Activated B cell treated with CpG ODN at 0.5 μM for 24 hours (primary cell): ENCODE measurements at regions of chr2 and their contacts with region 1.

Region 1: GRCh38 chr2:147628971-147629421 is 215.8 kb upstream of the ACVR2A start:
- DNase-seq: no peak
- ATAC-seq: peak; percentile 42
- H3K4me3 Mint-ChIP-seq: no peak overlapping the region
- H3K27ac Mint-ChIP-seq: peak overlapping the region; percentile 1
- H3K4me1 Mint-ChIP-seq: peaks cover 21% of the 10 kb centered on the region
- H3K27me3 Mint-ChIP-seq: no peaks in the 10 kb centered on the region
- CTCF ChIP-seq: no peak

Region 2: DNA sequence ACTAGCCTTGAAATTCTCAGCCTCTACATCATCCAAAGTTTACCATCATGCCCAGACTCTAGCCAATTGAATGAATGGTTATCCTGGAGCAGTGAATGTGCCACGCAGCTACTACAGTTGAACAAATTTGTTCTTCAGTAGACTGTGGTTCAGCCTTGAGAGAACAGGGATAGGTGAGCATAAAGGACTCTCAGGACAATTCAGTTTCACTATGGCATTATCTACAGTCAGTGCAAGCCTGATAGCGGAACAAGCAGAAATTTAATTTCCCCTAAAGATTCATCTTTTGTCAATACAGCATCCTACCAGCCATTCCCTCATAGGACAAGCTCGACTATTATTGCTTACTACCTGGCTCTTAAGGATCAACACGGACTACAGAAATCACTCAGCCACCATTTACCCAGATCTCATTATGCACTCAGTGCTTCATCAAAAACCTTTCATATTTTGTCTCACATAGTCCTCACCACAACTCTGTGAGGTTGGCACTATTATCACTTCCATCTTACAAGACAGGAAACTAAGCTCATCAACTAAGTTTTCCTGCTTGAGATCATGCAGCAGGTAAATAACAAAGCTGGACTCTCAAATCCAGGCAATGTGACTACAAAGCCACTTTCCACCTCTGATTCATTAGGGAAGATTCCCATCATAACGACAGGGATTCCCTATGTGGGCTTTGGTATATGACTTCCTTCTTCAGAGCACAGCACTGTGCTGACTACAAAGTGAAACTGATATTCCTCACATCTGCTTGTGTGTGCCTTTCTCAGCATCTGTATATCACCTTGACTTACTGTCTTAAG is 34.4 kb after region 1 on chr2:
- CTCF ChIA-PET with region 1: no interaction called
- POLR2A ChIA-PET with region 1: no interaction called
- intact Hi-C with region 1: no loop called
- DNase-seq: no peak
- ATAC-seq: no peak
- H3K4me3 Mint-ChIP-seq: no peak overlapping the region
- H3K27ac Mint-ChIP-seq: no peak overlapping the region
- H3K4me1 Mint-ChIP-seq: no peaks in the 10 kb centered on the region
- H3K27me3 Mint-ChIP-seq: no peaks in the 10 kb centered on the region
- CTCF ChIP-seq: no peak

Region 3: DNA sequence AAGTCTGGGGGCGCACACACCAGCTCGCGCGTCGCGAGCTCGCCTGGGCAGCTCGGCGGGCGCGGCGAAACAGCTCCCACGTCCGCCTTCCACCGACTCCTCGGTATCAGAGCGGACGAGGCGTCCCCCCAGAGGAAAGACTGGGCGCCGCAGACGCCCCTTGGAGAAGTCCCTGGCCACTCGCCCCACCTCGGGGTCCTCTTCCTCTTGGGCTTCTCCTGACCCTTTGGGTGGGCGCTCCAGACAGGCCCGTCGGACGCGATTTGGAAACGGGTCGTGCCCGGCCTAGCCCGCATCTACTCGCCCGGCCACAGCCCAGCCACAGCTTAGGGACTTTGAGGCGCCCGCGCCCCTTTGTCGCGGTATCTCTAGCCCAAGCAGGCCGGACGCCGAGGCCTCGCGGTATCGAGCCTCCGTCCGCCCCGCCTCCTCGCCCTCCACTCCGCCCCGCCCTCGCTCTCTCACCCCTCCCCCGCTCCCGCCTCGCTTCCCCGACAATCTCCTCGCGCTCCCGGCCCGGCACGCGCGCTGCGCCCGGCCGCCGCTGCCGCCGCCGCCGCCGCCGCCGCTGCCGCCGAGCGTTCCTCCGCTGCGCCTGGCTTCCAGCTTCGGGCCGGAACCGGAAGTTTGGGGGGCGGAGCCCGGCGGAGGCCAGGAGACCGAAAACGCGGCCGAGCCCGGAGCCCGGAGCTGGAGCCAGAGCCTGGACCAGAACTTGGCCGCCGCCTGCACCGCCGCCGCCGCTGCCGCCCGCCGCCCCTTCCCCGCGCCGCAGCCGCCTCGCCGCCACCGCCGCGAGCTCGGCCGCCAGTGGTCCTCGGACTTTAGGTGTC is 215.1 kb after region 1 on chr2:
- CTCF ChIA-PET with region 1: no interaction called
- POLR2A ChIA-PET with region 1: no interaction called
- intact Hi-C with region 1: loop called (anchors 5 kb)
- DNase-seq: peak; percentile 88
- ATAC-seq: peak; percentile 83
- H3K4me3 Mint-ChIP-seq: peak overlapping the region; percentile 88
- H3K27ac Mint-ChIP-seq: peak overlapping the region; percentile 80
- H3K4me1 Mint-ChIP-seq: peaks cover 29% of the 10 kb centered on the region
- H3K27me3 Mint-ChIP-seq: peaks cover 31% of the 10 kb centered on the region
- CTCF ChIP-seq: no peak